Activated naive CD4-positive, alpha-beta T cell treated with anti-CD3 and anti-CD28 coated beads, Interleukin-2, amount 10 ng/mL, durations not matched to agents 7 days and 5 days (primary cell): ENCODE measurements at regions of chr6 and their contacts with region 1.

Region 1: DNA sequence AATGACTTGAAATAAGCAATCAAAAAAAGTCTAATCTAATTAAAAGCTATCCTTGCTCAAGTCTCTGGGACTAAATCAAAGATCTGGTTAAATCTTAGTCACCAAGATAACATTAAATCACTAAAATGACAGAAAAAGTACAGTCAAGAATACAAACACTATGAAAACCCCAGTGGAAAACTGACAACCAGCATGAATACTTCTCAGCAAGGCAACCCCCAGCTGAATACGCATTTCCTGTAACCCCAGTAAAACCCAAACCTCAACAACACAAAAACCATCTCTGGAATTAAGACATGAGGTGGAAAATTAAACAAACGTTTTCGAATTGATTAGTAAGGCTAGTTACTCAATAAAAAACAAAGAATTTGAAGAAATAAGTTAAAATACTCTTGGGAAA is 23.7 kb upstream of the ZC3H12D start:
- DNase-seq: no peak
- H3K4me3 Mint-ChIP-seq: no peak overlapping the region
- H3K27ac Mint-ChIP-seq: peak overlapping the region; percentile 86
- H3K4me1 Mint-ChIP-seq: peaks cover 20% of the 10 kb centered on the region
- H3K27me3 Mint-ChIP-seq: no peaks in the 10 kb centered on the region

Region 2: DNA sequence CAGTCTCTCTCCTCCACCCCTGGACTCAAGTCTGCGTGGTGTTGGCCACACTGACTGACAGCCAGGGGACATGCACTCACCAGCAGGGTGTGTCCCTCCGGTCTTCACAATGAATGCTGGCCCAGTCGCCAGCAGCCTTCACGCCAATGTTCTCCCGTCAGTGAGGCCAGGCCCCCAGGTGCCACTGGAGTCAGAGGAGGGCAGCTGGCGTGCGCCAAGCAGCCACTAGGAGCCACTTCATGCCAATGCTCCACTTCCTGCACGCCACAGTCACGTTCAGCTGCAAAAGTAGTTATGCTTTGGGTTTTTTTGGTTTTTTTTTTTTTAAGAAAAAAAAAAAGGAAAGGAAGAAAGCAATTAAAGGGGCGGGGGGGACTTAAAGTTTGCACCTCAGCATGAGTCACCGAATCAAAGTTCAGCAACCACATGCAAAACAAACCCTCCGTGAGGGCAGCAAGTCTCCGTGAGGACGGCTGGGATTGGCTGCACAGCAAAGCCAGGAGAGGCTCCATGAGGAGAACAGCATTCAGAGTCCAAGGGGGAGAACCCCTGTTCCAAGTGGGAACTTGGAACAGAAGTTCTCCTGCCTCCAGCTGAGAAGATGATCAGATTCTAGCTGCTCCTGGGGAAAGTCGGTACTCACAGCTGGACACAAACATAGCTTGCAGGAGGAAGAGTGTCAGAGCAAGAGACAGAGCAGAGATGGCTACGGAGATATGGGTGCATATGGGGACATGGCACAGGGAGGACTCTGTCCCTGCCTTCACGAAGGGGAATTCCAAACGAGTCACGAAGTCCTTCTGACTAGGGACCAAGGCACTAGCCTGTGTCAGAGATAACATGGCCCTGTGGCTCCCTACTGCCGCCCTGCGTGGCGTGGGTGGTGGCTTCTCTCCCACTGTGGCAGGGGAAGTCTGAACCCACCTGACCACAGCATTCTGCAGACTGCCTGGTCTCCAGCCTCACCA is 23.5 kb before region 1 on chr6 and contains the start of gene ZC3H12D:
- CTCF ChIA-PET with region 1: interaction called, 27 read pairs
- DNase-seq: peak; percentile 87
- H3K4me3 Mint-ChIP-seq: peak within 1 kb of the TSS; percentile 80
- H3K27ac Mint-ChIP-seq: peak within 1 kb of the TSS; percentile 98
- H3K4me1 Mint-ChIP-seq: peaks cover 60% of the 10 kb centered on the region
- H3K27me3 Mint-ChIP-seq: no peaks in the 10 kb centered on the region

Region 3: DNA sequence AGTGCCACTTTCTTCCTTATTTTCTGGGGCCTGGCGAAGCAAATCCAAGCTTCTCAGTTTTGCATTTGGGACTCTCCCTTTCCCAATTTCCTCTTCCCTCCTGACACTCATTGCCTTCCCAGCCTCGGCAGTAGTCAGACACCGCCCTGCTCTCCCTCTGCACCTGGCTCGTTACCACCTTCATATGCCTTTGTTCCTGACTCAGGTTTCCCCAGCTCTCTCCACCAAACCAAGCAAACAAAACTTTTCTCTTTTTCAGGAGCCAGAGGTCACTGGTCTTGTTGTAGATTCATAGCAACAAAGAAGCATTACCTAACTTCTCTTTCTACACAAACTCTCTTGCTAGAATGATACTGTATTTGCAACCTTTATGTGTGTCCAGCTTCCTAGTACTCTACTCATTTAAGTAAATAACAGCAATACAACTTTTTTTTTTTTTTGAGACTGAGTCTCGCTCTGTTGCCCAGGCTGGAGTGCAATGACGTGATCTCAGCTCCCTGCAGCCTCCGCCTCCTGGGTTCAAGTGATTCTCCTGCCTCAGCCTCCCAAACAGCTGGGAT is 14.6 kb before region 1 on chr6:
- CTCF ChIA-PET with region 1: interaction called, 26 read pairs
- DNase-seq: no peak
- H3K4me3 Mint-ChIP-seq: no peak overlapping the region
- H3K27ac Mint-ChIP-seq: peak overlapping the region; percentile 42
- H3K4me1 Mint-ChIP-seq: peaks cover 53% of the 10 kb centered on the region
- H3K27me3 Mint-ChIP-seq: no peaks in the 10 kb centered on the region